B cell (primary cell): ENCODE measurements at regions of chr3 and their contacts with region 1.

Region 1: DNA sequence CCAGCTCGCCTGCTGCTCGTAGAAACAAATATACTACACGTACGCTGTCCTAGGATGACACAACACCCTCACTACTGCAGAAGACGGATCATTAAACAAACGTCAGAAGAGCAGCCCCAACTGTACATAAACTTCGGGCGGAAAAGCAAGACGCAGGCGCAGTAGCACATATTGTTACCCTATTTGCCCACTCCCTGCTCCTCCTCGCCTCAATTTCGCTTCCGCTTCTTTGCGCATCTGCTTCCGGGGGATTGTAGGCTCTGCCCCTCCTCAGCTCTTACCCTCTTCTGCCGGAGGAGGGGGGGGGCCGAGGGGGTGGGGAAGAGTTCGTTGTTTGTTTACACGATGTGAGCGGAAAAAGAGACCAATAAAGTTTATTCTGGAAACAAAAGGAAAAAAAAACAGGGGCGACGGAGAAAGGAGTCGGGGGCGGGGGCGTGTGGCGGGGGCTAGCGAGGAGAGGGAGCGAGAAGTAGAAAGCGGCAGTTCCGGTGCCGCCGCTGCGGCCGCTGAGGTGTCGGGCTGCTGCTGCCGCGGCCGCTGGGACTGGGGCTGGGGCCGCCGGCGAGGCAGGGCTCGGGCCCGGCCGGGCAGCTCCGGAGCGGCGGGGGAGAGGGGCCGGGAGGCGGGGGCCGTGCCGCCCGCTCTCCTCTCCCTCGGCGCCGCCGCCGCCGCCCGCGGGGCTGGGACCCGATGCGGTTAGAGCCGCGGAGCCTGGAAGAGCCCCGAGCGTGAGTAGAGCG is at the start of gene PIK3CA:
- DNase-seq: peak; percentile 98
- ATAC-seq: peak; percentile 76
- H3K4me3 ChIP-seq: peak within 1 kb of the TSS; percentile 84 to 98 (median 90)
- H3K4me3 Mint-ChIP-seq: peak within 1 kb of the TSS; percentile 97
- H3K27ac ChIP-seq: peak within 1 kb of the TSS; percentile 92 to 93
- H3K27ac Mint-ChIP-seq: peak within 1 kb of the TSS; percentile 97
- H3K4me1 ChIP-seq: peaks cover 11 to 22% of the 10 kb centered on the region in 2 donors
- H3K4me1 Mint-ChIP-seq: peaks cover 39% of the 10 kb centered on the region
- H3K27me3 ChIP-seq: no peaks in the 10 kb centered on the region
- H3K27me3 Mint-ChIP-seq: peaks cover 3% of the 10 kb centered on the region
- CTCF ChIP-seq: no peak
- total RNA-seq, gene PIK3CA: 59.5 and 61.8 TPM in 2 replicates

Region 2: DNA sequence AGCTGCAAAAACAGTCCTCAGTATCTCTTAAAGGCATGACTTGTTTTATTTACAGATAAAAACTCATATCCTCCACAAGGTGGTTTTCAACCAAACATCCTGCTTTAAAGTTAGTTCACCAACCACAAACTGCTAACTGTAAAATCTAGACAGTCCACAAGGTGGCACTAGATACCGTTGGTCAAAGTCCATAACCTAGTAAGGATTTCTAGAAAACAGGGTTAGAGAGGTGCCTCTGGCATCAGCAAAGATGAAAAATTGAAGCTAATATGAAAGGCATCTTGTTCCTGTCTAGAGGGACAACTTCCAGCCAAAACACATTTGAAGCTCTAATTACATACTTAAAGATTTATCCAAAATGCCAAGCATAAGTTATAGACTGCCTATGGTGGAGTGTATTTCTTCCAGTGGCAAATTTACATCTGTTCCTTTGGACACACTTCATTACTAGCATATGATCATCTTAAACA is 132.5 kb before region 1 on chr3:
- CTCF ChIA-PET with region 1: interaction called, 20 read pairs
- POLR2A ChIA-PET with region 1: interaction called, 9 read pairs
- intact Hi-C with region 1: loop called (anchors 1 kb)
- DNase-seq: peak; percentile 87
- ATAC-seq: peak; percentile 83
- H3K4me3 ChIP-seq: no peak overlapping the region
- H3K4me3 Mint-ChIP-seq: peak overlapping the region; percentile 41
- H3K27ac ChIP-seq: peak overlapping the region in 1 of 2 donors; percentile 81
- H3K27ac Mint-ChIP-seq: peak overlapping the region; percentile 75
- H3K4me1 ChIP-seq: peaks cover 16 to 34% of the 10 kb centered on the region in 2 donors
- H3K4me1 Mint-ChIP-seq: peaks cover 50% of the 10 kb centered on the region
- H3K27me3 ChIP-seq: no peaks in the 10 kb centered on the region
- H3K27me3 Mint-ChIP-seq: no peaks in the 10 kb centered on the region
- CTCF ChIP-seq: peak; percentile 94

Region 3: DNA sequence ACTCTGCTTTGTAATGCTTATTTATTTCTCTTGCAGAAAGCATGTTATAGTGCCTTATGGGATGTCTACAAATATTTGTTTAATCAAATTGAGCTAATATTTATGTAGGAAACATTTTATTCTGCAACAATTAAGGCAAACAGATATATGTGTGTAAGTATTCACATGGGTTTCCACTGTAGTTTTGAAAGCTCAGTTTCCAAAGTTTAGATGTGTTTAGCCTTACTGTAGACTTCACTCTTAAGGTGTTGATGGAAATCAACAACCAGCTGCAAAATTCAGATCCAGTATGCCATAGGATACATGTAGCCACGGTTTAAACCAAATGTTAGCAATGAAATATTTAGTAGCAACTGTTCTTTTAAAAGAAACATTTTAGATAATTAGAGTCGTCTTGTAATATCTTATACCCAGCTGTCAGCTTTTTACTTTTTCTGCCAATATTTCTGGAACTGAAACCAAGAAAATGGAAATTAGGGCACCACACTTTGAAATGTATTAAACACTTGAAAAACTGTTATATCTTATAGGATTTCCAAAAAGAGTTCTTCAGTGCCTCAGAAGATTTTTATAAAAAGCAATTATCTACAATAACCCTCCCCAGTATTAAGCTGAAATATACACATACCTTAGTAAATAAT is 18.6 kb after region 1 on chr3:
- CTCF ChIA-PET with region 1: interaction called, 3 read pairs
- POLR2A ChIA-PET with region 1: interaction called, 10 read pairs
- intact Hi-C with region 1: loop called (anchors 2 kb)
- DNase-seq: peak; percentile 15
- ATAC-seq: no peak
- H3K4me3 ChIP-seq: peak overlapping the region in 2 of 5 experiments; percentile 3 to 38
- H3K4me3 Mint-ChIP-seq: peak overlapping the region; percentile 34
- H3K27ac ChIP-seq: peak overlapping the region in 1 of 2 donors; percentile 44
- H3K27ac Mint-ChIP-seq: no peak overlapping the region
- H3K4me1 ChIP-seq: peaks cover 25 to 43% of the 10 kb centered on the region in 2 donors
- H3K4me1 Mint-ChIP-seq: peaks cover 64% of the 10 kb centered on the region
- H3K27me3 ChIP-seq: no peaks in the 10 kb centered on the region
- H3K27me3 Mint-ChIP-seq: no peaks in the 10 kb centered on the region
- CTCF ChIP-seq: no peak

Region 4: DNA sequence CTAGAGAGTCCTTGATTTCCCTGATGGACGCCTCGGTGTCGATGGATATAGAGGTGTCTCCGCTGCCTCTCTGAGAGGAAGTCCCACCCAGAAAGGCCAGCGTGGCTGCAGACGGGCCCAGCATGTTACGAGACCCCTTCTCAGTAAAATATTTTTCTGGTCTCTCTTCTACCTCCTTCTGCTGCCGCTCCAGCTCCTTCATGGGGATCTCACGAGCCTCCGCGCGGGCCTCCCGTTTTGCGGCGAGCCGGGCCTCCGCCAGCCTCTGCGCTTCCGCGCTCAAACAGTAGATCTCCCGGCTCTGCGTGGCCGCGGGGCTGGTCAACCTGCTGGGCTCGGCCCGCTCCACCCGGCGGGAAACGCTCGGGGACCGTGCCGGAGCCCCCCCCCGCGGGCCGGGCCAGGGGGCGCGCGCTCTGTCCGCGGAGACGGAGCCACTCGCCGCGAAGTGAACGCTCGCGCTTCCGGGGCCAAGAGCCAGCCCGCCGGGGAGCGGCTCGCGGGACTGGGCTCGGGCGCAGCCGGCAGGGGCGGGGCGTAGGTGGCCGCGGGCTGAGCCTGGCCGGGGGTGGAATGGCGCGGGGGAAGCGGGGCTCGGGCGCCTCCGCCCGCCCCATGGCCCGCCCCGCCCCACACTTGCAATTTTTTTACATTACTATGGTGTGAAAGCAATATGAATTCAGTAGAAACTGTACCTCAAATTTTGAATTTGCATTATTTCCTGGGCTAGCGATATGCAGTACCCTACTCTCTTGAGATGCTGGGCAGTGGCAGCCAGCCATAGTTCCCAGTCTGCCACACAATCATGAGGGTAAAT is 113.1 kb after region 1 on chr3:
- CTCF ChIA-PET with region 1: no interaction called
- POLR2A ChIA-PET with region 1: interaction called, 10 read pairs
- intact Hi-C with region 1: loop called (anchors 1 kb)
- DNase-seq: peak; percentile 78
- ATAC-seq: peak; percentile 92
- H3K4me3 ChIP-seq: peak overlapping the region; percentile 48 to 77 (median 67)
- H3K4me3 Mint-ChIP-seq: peak overlapping the region; percentile 89
- H3K27ac ChIP-seq: peak overlapping the region in 1 of 2 donors; percentile 66
- H3K27ac Mint-ChIP-seq: peak overlapping the region; percentile 84
- H3K4me1 ChIP-seq: peaks cover 15 to 23% of the 10 kb centered on the region in 2 donors
- H3K4me1 Mint-ChIP-seq: peaks cover 52% of the 10 kb centered on the region
- H3K27me3 ChIP-seq: no peaks in the 10 kb centered on the region
- H3K27me3 Mint-ChIP-seq: no peaks in the 10 kb centered on the region
- CTCF ChIP-seq: no peak

Region 5: GRCh38 chr3:179438841-179439240 is 290.8 kb after region 1 on chr3:
- CTCF ChIA-PET with region 1: no interaction called
- POLR2A ChIA-PET with region 1: no interaction called
- intact Hi-C with region 1: loop called (anchors 1 kb)
- DNase-seq: peak; percentile 94
- ATAC-seq: peak; percentile 92
- H3K4me3 ChIP-seq: peak overlapping the region in 4 of 5 experiments; percentile 1 to 60 (median 36)
- H3K4me3 Mint-ChIP-seq: peak overlapping the region; percentile 72
- H3K27ac ChIP-seq: peak overlapping the region; percentile 73 to 84
- H3K27ac Mint-ChIP-seq: peak overlapping the region; percentile 89
- H3K4me1 ChIP-seq: peaks cover 33 to 45% of the 10 kb centered on the region in 2 donors
- H3K4me1 Mint-ChIP-seq: peaks cover 44% of the 10 kb centered on the region
- H3K27me3 ChIP-seq: no peaks in the 10 kb centered on the region
- H3K27me3 Mint-ChIP-seq: no peaks in the 10 kb centered on the region
- CTCF ChIP-seq: no peak

Region 6: GRCh38 chr3:179604321-179605078 is 456.5 kb after region 1 on chr3 and contains the starts of genes MRPL47 and NDUFB5:
- CTCF ChIA-PET with region 1: no interaction called
- POLR2A ChIA-PET with region 1: interaction called, 11 read pairs
- intact Hi-C with region 1: loop called (anchors 1 kb)
- DNase-seq: peak; percentile 96
- ATAC-seq: peak; percentile 98
- H3K4me3 ChIP-seq: peak within 1 kb of the TSS; percentile 65 to 96 (median 80)
- H3K4me3 Mint-ChIP-seq: peak within 1 kb of the TSS; percentile 99
- H3K27ac ChIP-seq: peak within 1 kb of the TSS; percentile 72 to 97
- H3K27ac Mint-ChIP-seq: peak within 1 kb of the TSS; percentile 98
- H3K4me1 ChIP-seq: peaks cover 39 to 44% of the 10 kb centered on the region in 2 donors
- H3K4me1 Mint-ChIP-seq: peaks cover 51% of the 10 kb centered on the region
- H3K27me3 ChIP-seq: no peaks in the 10 kb centered on the region
- H3K27me3 Mint-ChIP-seq: no peaks in the 10 kb centered on the region
- CTCF ChIP-seq: no peak
- total RNA-seq, gene MRPL47: 20.2 and 22.0 TPM in 2 replicates
- total RNA-seq, gene NDUFB5: 52.9 and 60.2 TPM in 2 replicates